ENCODE measurements at regions of chrX and their contacts with region 1.

Region 1: GRCh38 chrX:101931488-101932248 is at the start of gene ZMAT1:
- DNase-seq: peak; percentile 72 to 97 (median 88)
- ATAC-seq: peak; percentile 83 to 85
- H3K4me3 Mint-ChIP-seq: peak within 1 kb of the TSS; percentile 88 to 94 (median 92)
- H3K27ac Mint-ChIP-seq: peak within 1 kb of the TSS; percentile 95 to 99 (median 97)
- H3K4me1 Mint-ChIP-seq: peaks cover 16 to 30% (median 22%) of the 10 kb centered on the region in 4 donors
- H3K27me3 Mint-ChIP-seq: peaks cover 0 to 2% (median 0%) of the 10 kb centered on the region in 5 donors
- polyA plus RNA-seq, gene ZMAT1: 3.5 to 4.5 (median 4.3) TPM

Region 2: DNA sequence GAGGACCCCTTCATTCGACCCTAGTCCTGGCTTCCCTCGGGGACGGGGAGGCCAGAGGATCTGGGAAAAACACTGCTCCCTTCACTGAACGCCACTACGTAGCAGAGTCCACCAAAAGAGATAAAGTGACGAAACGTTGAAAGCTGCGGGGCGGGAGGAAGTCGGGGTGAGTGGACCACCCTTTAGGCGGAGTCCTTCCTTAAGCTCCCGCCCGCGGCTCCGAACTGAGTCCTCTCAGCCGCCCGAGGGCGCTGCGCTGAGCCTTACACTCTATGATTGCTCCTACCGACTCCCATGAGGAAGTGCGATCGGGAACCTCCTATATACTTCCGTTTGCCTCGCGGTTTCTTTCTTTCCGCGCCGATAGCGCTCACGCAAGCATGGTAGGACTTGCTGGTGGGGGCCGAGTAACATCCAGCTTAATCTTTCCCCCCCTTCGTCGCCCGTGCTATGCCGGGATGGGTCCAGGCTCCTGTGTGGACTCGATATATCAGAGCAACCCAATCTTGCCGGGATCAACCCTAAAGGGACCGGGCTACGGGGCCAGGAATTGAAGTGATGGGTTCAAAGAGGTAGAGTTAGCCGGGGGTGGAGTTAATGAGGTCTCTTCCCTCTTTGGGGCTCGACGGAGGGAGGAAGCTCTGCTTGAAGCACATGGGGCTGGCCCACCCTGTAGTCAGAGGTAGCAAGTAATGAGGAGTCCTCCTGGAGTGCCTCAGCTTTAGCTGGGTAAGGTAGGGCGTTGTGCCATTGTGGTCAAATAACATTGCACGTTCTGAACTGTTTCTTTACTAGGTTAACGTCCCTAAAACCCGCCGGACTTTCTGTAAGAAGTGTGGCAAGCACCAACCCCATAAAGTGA is 540.8 kb before region 1 on chrX and contains the start of gene RPL36A:
- POLR2A ChIA-PET with region 1: interaction called, 16 read pairs
- DNase-seq: peak; percentile 59 to 89 (median 72)
- ATAC-seq: peak; percentile 93
- H3K4me3 Mint-ChIP-seq: peak within 1 kb of the TSS; percentile 88 to 95 (median 92)
- H3K27ac Mint-ChIP-seq: peak within 1 kb of the TSS; percentile 91 to 98 (median 96)
- H3K4me1 Mint-ChIP-seq: peaks cover 3 to 36% (median 27%) of the 10 kb centered on the region in 4 donors
- H3K27me3 Mint-ChIP-seq: no peaks in the 10 kb centered on the region
- polyA plus RNA-seq, gene RPL36A: 2,876 to 3,216 (median 3,107) TPM

Region 3: DNA sequence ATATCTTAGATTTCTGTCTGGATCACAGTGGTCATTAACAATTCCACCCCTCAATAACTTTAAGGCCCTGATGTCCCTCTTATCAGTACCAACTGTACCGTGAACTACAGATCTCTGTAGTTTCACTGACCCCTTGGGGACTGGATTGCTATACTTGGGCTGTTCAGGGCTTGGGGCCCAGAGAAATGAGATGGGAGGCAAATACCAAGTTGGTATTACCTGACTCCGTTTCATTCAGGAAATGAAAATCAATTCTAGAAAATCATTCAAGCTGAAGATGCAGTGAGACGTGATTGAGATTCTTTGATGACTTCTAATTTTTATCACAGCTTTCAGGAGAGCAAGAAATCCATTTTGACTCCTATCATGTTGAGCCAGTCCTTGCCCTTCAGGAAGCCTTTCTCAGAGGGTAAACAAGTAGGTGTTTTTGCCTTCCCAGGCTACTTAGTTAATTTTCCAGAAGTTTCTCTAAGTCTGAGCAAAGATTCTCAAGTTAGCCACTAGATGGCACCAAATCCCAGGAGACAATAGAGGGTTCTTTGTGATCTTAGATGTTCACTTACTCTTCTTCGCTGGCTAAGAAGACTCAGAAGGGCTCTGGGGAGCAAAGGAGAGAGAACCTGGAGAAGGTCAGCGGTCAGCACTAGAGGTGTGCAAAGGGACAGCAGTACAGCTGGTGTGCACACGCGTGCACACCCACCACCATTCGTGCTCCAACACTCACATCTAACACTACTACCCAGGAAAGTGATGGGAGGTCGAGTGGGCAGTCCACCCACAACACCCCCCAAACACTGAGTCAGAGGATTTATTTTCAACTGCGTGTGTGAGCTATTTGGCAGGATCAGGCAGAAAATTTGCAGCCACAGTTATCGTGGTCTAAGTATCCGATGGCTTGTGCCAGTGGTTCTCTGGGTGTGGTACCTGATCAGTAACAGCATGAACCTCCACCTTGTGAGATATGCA is 516.2 kb before region 1 on chrX:
- POLR2A ChIA-PET with region 1: interaction called, 10 read pairs
- DNase-seq: peak in 8 of 10 donors; percentile 5 to 72 (median 56)
- ATAC-seq: peak; percentile 60 to 75
- H3K4me3 Mint-ChIP-seq: peak overlapping the region; percentile 12 to 79 (median 44)
- H3K27ac Mint-ChIP-seq: peak overlapping the region; percentile 78 to 94 (median 88)
- H3K4me1 Mint-ChIP-seq: peaks cover 19 to 63% (median 61%) of the 10 kb centered on the region in 4 donors
- H3K27me3 Mint-ChIP-seq: no peaks in the 10 kb centered on the region

Region 4: GRCh38 chrX:103686199-103687072 is 1754.8 kb after region 1 on chrX and contains the start of gene MORF4L2:
- POLR2A ChIA-PET with region 1: interaction called, 11 read pairs
- DNase-seq: peak in 9 of 10 donors; percentile 55 to 97 (median 90)
- ATAC-seq: peak; percentile 86 to 87
- H3K4me3 Mint-ChIP-seq: peak within 1 kb of the TSS in 7 of 10 donors; percentile 51 to 81 (median 77)
- H3K27ac Mint-ChIP-seq: peak within 1 kb of the TSS in 6 of 10 donors; percentile 7 to 90 (median 84)
- H3K4me1 Mint-ChIP-seq: peaks cover 5 to 13% (median 10%) of the 10 kb centered on the region in 4 donors
- H3K27me3 Mint-ChIP-seq: no peaks in the 10 kb centered on the region
- polyA plus RNA-seq, gene MORF4L2: 66.3 to 96.5 (median 78.2) TPM

Measured in naive thymus-derived CD8-positive, alpha-beta T cell (primary cell).